ENCODE measurements at regions of chr5 and their contacts with region 1.

Region 1: GRCh38 chr5:18653216-18653752 is 1019.0 kb downstream of the TAF11L14 start:
- DNase-seq: no peak
- H3K4me3 ChIP-seq: no peak overlapping the region
- H3K27ac ChIP-seq: no peak overlapping the region
- H3K4me1 ChIP-seq: no peaks in the 10 kb centered on the region
- H3K27me3 ChIP-seq: no peaks in the 10 kb centered on the region
- CTCF ChIP-seq: no peak

Region 2: DNA sequence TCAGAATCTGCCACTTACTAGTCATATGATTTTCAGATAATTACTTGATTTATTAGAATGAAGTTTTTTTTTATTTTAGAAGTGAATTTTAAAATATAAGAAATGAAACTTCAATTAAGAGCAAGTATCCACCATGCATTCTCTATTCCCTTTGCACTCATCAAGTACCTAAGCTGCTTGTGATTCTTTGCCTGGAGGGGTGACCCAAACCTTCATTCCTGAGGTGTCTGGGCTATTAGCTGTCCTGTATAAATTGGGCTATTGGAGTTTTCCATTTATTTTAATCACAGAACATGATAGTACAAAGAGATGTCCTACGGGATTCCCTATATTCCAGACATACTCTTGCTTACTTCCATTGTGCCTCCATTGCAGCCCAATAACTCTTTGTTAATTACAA is 76.9 kb before region 1 on chr5:
- CTCF ChIA-PET with region 1: no interaction called
- POLR2A ChIA-PET with region 1: no interaction called
- intact Hi-C with region 1: loop called (anchors 10 kb)
- DNase-seq: no peak
- H3K4me3 ChIP-seq: no peak overlapping the region
- H3K27ac ChIP-seq: no peak overlapping the region
- H3K4me1 ChIP-seq: no peaks in the 10 kb centered on the region
- H3K27me3 ChIP-seq: no peaks in the 10 kb centered on the region
- CTCF ChIP-seq: no peak

Measured in PC-9 (cell line).